ENCODE measurements at regions of chr13 and their contacts with region 1.

Region 1: DNA sequence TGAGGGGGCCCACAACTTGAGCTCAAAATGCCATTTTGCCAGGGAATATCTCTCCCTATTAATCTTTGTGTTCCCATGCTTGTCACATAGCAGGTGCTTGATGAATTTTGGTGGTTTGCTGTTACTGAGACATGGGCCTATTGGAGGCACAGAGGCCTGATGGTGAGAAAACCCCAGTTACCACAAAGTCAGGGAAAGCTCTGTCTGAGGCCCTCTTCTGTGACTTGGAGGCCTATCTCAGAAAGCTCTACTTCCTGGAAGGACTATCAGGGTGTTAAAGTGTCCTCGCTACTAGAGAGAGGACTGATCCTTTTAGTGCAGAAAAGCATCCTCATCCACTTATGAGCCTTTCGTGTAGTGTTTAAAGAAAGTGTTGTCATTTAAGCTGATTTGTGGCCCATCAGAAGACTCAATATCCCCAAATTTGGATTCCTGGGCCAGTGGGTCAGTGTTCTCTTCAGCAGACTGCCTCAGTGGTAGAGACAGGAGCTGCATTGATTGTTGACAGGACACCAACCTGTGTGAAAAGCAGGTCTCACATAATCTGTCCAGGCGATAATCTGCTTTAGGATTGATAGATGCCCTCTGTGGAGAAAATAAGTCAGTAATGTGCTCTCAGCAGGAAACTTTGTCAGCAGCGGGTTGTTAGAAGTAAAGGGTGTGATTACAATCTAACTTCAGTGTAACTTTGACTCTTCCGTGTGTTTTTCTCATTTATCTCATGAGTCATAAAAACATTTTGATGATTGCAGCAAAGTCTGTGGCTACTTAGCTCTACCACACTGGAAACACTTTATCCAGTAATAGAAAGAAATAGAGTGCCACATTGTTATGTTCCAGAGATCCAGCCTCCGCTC is 121.0 kb downstream of the AKAP11 start:
- DNase-seq: peak; percentile 68
- H3K4me3 Mint-ChIP-seq: peak overlapping the region; percentile 96
- H3K27ac Mint-ChIP-seq: peak overlapping the region; percentile 100
- H3K4me1 Mint-ChIP-seq: peaks cover 79% of the 10 kb centered on the region
- H3K27me3 Mint-ChIP-seq: no peaks in the 10 kb centered on the region

Region 2: DNA sequence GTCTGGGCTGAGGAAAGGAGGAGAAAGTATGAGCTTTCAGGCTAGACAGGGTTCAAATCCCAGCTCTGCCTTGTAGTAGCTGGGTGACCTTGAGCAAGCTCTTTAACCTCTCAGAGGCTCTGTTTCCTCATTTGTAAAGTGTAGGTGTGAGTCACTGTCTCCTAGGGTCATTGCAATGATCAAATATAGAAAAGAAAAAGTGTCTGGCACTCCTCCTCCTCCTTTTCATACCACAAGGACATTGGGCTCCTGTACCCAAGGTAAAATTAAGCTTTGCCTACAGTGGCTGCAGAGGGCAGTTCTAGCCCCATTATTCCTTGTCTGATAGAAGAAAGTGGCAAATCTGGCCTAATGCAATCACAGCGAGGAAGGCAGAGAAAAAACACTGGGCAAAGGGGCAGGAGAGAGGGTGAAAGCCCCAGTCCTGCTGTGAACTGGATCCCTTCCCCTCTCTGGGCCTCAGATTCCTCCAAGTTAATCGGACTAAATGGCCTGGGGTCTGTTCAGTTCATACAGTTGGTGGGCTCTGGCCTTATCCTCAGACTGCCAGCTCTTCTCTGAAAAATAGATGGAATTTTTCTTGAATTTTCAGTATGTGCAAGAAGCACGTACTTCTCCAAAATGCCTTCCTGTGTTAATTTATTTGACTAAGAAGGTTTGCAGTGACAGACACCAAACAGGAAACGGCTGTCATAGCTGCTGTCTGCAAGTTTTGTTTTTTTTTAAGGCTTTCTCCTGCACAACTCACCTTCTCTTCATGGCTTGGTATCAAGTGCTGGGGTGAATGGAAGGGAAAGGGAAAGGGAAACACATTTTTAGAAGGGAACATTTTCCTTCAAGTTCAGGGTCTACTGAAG is 900.3 kb before region 1 on chr13:
- CTCF ChIA-PET with region 1: no interaction called
- POLR2A ChIA-PET with region 1: no interaction called
- intact Hi-C with region 1: loop called (anchors 5 kb)
- DNase-seq: peak; percentile 42
- H3K4me3 Mint-ChIP-seq: peak overlapping the region; percentile 45
- H3K27ac Mint-ChIP-seq: peak overlapping the region; percentile 89
- H3K4me1 Mint-ChIP-seq: peaks cover 74% of the 10 kb centered on the region
- H3K27me3 Mint-ChIP-seq: no peaks in the 10 kb centered on the region

Region 3: DNA sequence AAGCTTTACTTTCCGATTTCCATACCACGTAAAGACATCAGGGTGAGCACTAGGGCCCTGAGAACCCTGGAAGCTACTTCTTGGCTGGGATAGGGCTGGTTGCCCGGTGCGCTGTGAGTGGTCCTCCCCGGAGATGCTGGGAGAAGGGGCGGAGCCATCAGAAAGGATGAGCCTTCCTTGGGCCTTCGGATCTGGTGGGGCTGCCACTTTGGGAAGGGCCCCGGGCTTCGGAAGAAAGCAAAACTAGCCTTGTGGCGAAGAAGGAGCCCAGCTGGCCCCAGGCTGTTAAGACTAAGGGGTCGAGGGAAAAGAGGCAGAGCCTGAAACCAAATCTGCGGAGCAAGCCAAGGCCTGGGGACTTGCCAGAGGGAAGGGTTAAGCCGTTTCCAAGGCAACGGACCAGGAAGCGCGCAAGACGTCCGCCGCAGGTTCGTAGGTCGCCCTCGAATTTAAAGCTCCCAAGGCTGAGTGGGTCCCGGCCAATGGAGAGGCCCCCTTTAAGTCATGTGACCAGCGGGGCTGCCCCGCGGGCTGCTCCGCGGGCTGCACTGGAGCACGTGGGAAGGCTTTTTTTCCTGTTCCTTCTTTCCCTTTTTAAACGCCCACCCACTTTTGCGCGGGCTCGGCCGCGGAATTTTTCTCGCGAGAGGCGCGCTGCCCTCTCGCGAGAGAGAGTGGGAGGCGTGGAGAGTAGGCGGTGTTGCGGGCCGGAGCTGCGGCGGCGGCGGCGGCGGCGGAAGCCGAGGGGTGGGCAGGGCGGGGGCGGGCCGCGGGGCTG is 121.4 kb before region 1 on chr13:
- CTCF ChIA-PET with region 1: interaction called, 3 read pairs
- POLR2A ChIA-PET with region 1: interaction called, 88 read pairs
- intact Hi-C with region 1: loop called (anchors 1 kb)
- DNase-seq: peak; percentile 96
- H3K4me3 Mint-ChIP-seq: peak overlapping the region; percentile 98
- H3K27ac Mint-ChIP-seq: peak overlapping the region; percentile 98
- H3K4me1 Mint-ChIP-seq: peaks cover 43% of the 10 kb centered on the region
- H3K27me3 Mint-ChIP-seq: no peaks in the 10 kb centered on the region

Region 4: GRCh38 chr13:42367831-42368230 is 25.1 kb before region 1 on chr13:
- CTCF ChIA-PET with region 1: interaction called, 8 read pairs
- POLR2A ChIA-PET with region 1: interaction called, 51 read pairs
- intact Hi-C with region 1: loop called (anchors 1 kb)
- DNase-seq: no peak
- H3K4me3 Mint-ChIP-seq: no peak overlapping the region
- H3K27ac Mint-ChIP-seq: no peak overlapping the region
- H3K4me1 Mint-ChIP-seq: peaks cover 47% of the 10 kb centered on the region
- H3K27me3 Mint-ChIP-seq: no peaks in the 10 kb centered on the region

Region 5: GRCh38 chr13:42432711-42433110 is 39.8 kb after region 1 on chr13:
- CTCF ChIA-PET with region 1: no interaction called
- POLR2A ChIA-PET with region 1: no interaction called
- intact Hi-C with region 1: no loop called
- DNase-seq: no peak
- H3K4me3 Mint-ChIP-seq: no peak overlapping the region
- H3K27ac Mint-ChIP-seq: no peak overlapping the region
- H3K4me1 Mint-ChIP-seq: no peaks in the 10 kb centered on the region
- H3K27me3 Mint-ChIP-seq: no peaks in the 10 kb centered on the region

Region 6: GRCh38 chr13:42574435-42575311 is 181.7 kb after region 1 on chr13:
- CTCF ChIA-PET with region 1: no interaction called
- POLR2A ChIA-PET with region 1: interaction called, 4 read pairs
- intact Hi-C with region 1: loop called (anchors 2 kb)
- DNase-seq: peak; percentile 75
- H3K4me3 Mint-ChIP-seq: peak overlapping the region; percentile 73
- H3K27ac Mint-ChIP-seq: peak overlapping the region; percentile 55
- H3K4me1 Mint-ChIP-seq: peaks cover 34% of the 10 kb centered on the region
- H3K27me3 Mint-ChIP-seq: peaks cover 26% of the 10 kb centered on the region

Measured in activated CD4-positive, alpha-beta memory T cell treated with anti-CD3 and anti-CD28 coated beads for 36 hours (primary cell).